ENCODE measurements at regions of chr14 and their contacts with region 1.

Region 1: GRCh38 chr14:91114079-91115065 is 499 bp downstream of the DGLUCY start:
- DNase-seq: peak; percentile 81
- H3K4me3 Mint-ChIP-seq: peak overlapping the region; percentile 83
- H3K27ac Mint-ChIP-seq: peak overlapping the region; percentile 94
- H3K4me1 Mint-ChIP-seq: peaks cover 66% of the 10 kb centered on the region
- H3K27me3 Mint-ChIP-seq: no peaks in the 10 kb centered on the region

Region 2: GRCh38 chr14:91021991-91022621 is 92.3 kb before region 1 on chr14:
- CTCF ChIA-PET with region 1: no interaction called
- POLR2A ChIA-PET with region 1: no interaction called
- intact Hi-C with region 1: loop called (anchors 2 kb)
- DNase-seq: no peak
- H3K4me3 Mint-ChIP-seq: peak overlapping the region; percentile 54
- H3K27ac Mint-ChIP-seq: peak overlapping the region; percentile 86
- H3K4me1 Mint-ChIP-seq: peaks cover 65% of the 10 kb centered on the region
- H3K27me3 Mint-ChIP-seq: no peaks in the 10 kb centered on the region

Region 3: GRCh38 chr14:91038438-91038837 is 75.9 kb before region 1 on chr14:
- CTCF ChIA-PET with region 1: interaction called, 5 read pairs
- POLR2A ChIA-PET with region 1: interaction called, 6 read pairs
- intact Hi-C with region 1: loop called (anchors 2 kb)
- DNase-seq: peak; percentile 45
- H3K4me3 Mint-ChIP-seq: no peak overlapping the region
- H3K27ac Mint-ChIP-seq: peak overlapping the region; percentile 42
- H3K4me1 Mint-ChIP-seq: peaks cover 75% of the 10 kb centered on the region
- H3K27me3 Mint-ChIP-seq: no peaks in the 10 kb centered on the region

Region 4: DNA sequence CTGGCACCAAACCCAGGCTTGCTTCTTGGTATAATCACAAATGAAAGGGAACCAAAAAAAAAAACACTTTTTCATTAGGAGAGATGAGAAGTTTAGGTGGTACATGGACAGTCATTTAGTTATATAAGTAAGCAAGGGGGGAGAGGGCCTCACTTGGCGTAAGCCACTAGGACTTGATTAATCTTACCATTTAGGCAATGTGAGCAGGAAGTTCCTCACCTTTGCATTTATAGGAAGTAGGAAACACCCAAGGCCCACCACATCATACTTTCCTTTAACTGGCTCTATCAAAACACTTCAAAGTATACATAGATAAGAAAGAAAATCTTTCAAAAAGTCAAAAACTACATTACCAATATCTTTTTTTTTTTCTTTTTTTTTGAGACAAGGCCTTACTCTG is 47.2 kb before region 1 on chr14:
- CTCF ChIA-PET with region 1: interaction called, 3 read pairs
- POLR2A ChIA-PET with region 1: interaction called, 116 read pairs
- intact Hi-C with region 1: loop called (anchors 1 kb)
- DNase-seq: peak; percentile 66
- H3K4me3 Mint-ChIP-seq: no peak overlapping the region
- H3K27ac Mint-ChIP-seq: peak overlapping the region; percentile 65
- H3K4me1 Mint-ChIP-seq: peaks cover 66% of the 10 kb centered on the region
- H3K27me3 Mint-ChIP-seq: no peaks in the 10 kb centered on the region

Region 5: DNA sequence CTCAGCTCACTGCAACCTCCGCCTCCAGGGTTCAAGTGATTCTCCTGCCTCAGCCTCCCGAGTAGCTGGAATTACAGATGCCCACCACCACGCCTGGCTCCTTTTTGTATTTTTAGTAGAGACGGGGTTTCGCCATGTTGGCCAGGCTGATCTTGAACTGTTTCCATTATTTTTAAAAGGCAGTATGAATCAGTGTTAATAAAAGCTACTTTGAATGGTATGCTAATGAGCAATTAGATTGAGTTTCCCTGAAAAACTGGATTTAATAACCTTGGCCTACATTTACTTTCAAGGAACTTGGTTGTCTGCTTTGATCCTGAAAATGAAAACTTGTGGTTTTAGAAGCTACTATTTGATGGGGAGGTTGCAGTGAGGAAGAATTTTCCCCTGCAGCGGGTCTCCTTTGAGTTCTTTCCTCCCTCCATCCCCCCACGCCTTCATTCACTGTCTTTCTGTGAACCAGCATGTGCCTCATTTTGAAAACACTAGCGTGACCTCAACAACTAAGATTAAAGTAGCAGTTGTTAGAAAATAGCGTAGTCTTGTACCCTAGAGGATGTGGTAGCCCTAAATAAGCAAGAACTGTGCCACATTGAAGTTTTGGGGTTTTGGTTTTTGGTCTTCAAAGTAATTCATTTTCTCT is 36.2 kb before region 1 on chr14:
- CTCF ChIA-PET with region 1: interaction called, 7 read pairs
- POLR2A ChIA-PET with region 1: interaction called, 22 read pairs
- intact Hi-C with region 1: loop called (anchors 1 kb)
- DNase-seq: peak; percentile 76
- H3K4me3 Mint-ChIP-seq: peak overlapping the region; percentile 13
- H3K27ac Mint-ChIP-seq: peak overlapping the region; percentile 87
- H3K4me1 Mint-ChIP-seq: peaks cover 30% of the 10 kb centered on the region
- H3K27me3 Mint-ChIP-seq: no peaks in the 10 kb centered on the region

Region 6: DNA sequence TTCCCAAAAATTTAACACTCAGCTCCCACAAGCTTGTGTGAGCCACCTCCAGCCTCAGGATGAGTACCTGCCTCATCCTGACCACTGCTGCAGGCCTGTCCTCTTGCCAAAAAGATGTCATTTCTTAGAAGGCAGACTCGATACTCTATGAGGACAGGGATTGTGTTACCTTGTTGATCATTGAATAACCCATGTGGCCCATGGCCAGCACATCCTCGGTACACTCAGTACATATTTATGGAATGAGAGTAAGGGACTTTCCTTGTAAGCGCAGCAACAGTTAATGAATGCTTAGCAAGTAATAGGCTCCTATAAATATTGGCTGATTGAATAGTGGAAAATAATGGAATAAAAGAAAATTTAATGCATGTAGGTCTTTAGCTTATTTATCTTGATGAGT is 15.8 kb before region 1 on chr14:
- CTCF ChIA-PET with region 1: interaction called, 4 read pairs
- POLR2A ChIA-PET with region 1: interaction called, 11 read pairs
- intact Hi-C with region 1: no loop called
- DNase-seq: no peak
- H3K4me3 Mint-ChIP-seq: no peak overlapping the region
- H3K27ac Mint-ChIP-seq: no peak overlapping the region
- H3K4me1 Mint-ChIP-seq: peaks cover 18% of the 10 kb centered on the region
- H3K27me3 Mint-ChIP-seq: no peaks in the 10 kb centered on the region